K562 (cell line): ENCODE measurements at regions of chr1 and their contacts with region 1.

Region 1: GRCh38 chr1:167066333-167067122 is 23.6 kb downstream of the GPA33 start:
- DNase-seq: peak; percentile 87 to 97 (median 94)
- ATAC-seq: peak; percentile 94
- H3K4me3 ChIP-seq: no peak overlapping the region
- H3K27ac ChIP-seq: no peak overlapping the region
- H3K4me1 ChIP-seq: peaks cover 0 to 9% of the 10 kb centered on the region in 2 experiments; a peak in 3 of 5 replicates
- H3K27me3 ChIP-seq: peaks cover 41 to 45% of the 10 kb centered on the region in 2 experiments
- CTCF ChIP-seq: peak; percentile 94 to 98 (median 97)
- EP300 ChIP-seq: no peak
- POLR2A ChIP-seq: no peak
- RAD21 ChIP-seq: peak; percentile 98

Region 2: GRCh38 chr1:166740668-166741276 is 325.8 kb before region 1 on chr1:
- CTCF ChIA-PET with region 1: no interaction called
- POLR2A ChIA-PET with region 1: no interaction called
- in situ Hi-C with region 1: no loop called
- intact Hi-C with region 1: no loop called
- DNase-seq: no peak
- ATAC-seq: peak; percentile 43; the same call in 2 of the 3 replicates
- H3K4me3 ChIP-seq: no peak overlapping the region
- H3K27ac ChIP-seq: no peak overlapping the region
- H3K4me1 ChIP-seq: no peaks in the 10 kb centered on the region
- H3K27me3 ChIP-seq: no peaks in the 10 kb centered on the region
- CTCF ChIP-seq: no peak
- EP300 ChIP-seq: no peak
- POLR2A ChIP-seq: no peak
- RAD21 ChIP-seq: no peak

Region 3: DNA sequence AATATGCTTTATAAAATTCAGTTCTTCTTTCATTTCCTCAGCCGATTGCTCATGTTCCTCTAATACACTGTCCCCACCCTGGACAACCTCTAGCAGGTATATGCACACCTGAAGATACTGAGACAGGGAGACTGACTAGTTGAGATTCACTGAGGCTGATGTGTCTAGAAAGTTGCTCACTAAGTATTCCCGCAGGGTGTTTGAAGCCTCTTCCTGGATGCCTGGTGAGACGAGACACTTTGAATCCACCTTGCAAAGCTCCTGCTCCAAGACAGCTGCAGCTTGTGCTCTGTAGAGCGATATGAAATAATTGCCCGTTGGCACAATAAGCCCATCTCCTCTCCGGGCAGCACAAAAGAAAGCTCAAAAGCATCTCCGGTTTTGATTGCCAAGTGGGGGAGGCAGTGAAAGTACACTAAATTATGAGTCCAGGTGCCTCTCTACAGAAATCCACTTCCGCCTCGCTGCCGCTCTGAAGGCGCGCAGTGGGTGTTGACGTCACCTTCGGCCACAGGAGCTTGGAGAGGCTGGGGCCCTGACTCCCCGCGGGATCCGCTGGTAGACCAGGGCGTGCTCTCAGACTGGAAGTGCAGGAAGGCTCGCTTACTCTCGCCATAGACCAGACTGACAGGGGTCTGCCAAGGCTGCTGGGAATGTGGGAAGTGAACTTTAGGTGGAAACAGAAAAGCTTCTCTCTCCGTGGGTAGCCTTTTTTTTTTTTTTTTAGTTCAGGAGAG is 22.6 kb before region 1 on chr1:
- CTCF ChIA-PET with region 1: no interaction called
- POLR2A ChIA-PET with region 1: no interaction called
- in situ Hi-C with region 1: no loop called
- intact Hi-C with region 1: no loop called
- DNase-seq: peak; percentile 70 to 84 (median 78)
- ATAC-seq: peak; percentile 100
- H3K4me3 ChIP-seq: peak overlapping the region; percentile 26
- H3K27ac ChIP-seq: no peak overlapping the region
- H3K4me1 ChIP-seq: peaks cover 0 to 6% of the 10 kb centered on the region in 2 experiments; a peak in 2 of 5 replicates
- H3K27me3 ChIP-seq: peaks cover 0 to 5% of the 10 kb centered on the region in 2 experiments; a peak in 1 of 5 replicates
- CTCF ChIP-seq: no peak
- EP300 ChIP-seq: no peak
- POLR2A ChIP-seq: no peak
- RAD21 ChIP-seq: no peak

Region 4: DNA sequence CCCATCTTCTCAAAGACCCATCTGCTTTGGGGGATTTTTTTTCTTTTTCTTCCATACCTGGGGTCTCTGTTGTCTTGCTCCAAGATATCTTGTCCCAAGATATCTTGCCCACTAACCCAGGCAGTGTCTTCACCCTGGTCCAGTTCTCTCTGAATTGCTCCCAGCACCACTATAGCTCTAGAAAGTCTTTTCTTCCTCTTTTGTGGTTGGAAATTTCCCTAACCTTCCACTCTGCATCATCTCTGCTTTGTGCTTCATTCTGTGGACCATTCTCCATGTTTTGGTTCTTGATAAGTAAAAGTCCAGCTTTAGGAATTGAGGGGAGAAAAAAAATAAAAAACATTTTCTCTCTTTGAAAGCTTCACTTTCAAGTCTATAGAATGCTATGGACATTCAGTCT is 48.2 kb after region 1 on chr1:
- CTCF ChIA-PET with region 1: no interaction called
- POLR2A ChIA-PET with region 1: no interaction called
- in situ Hi-C with region 1: no loop called
- intact Hi-C with region 1: no loop called
- DNase-seq: no peak
- ATAC-seq: no peak
- H3K4me3 ChIP-seq: no peak overlapping the region
- H3K27ac ChIP-seq: no peak overlapping the region
- H3K4me1 ChIP-seq: no peaks in the 10 kb centered on the region
- H3K27me3 ChIP-seq: peaks cover 20 to 37% of the 10 kb centered on the region in 2 experiments
- CTCF ChIP-seq: no peak
- EP300 ChIP-seq: no peak
- POLR2A ChIP-seq: no peak
- RAD21 ChIP-seq: no peak

Region 5: DNA sequence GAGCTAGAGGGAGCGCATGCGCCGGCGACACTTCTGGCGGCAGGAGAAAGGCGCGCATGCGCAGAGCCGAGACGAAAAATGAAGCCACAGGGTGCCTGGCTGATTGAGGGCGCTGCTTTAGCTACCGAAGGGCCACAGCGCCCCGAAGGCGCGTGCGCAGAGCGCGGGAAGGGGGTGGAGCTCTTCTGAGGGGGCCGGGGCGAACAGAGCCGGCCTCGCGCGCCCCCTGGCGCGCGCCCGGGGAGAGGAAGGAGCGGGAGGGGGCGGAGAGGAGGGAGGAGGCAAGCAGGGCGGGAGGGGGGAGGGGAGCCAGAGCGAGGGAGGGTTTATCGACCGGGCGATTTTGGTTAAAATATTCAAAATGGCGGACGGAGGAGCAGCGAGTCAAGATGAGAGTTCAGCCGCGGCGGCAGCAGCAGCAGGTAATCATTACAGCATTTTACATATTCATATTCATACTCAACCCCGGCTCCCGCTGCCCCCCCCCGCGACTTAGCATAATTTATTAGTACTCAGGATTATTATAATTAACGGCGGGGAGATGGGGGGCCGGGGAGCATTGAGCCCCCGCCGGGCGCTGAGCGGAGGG is 154.1 kb after region 1 on chr1 and contains the start of gene POU2F1:
- CTCF ChIA-PET with region 1: interaction called, 6 read pairs
- POLR2A ChIA-PET with region 1: no interaction called
- in situ Hi-C with region 1: no loop called
- intact Hi-C with region 1: loop called (anchors 1 kb)
- DNase-seq: peak; percentile 96 to 99 (median 97)
- ATAC-seq: peak; percentile 82
- H3K4me3 ChIP-seq: peak within 1 kb of the TSS; percentile 69
- H3K27ac ChIP-seq: peak within 1 kb of the TSS; percentile 95
- H3K4me1 ChIP-seq: peaks cover 17 to 26% of the 10 kb centered on the region in 2 experiments; a peak in 4 of 5 replicates
- H3K27me3 ChIP-seq: no peaks in the 10 kb centered on the region
- CTCF ChIP-seq: peak; percentile 62 to 93 (median 93)
- EP300 ChIP-seq: no peak
- POLR2A ChIP-seq: no peak; the same call in none of the 2 replicates
- RAD21 ChIP-seq: peak; percentile 48 to 59
- polyA plus RNA-seq, gene POU2F1: 2.6 to 6.0 TPM

Region 6: GRCh38 chr1:167401260-167401873 is 334.8 kb after region 1 on chr1:
- CTCF ChIA-PET with region 1: interaction called, 3 read pairs
- POLR2A ChIA-PET with region 1: no interaction called
- in situ Hi-C with region 1: no loop called
- intact Hi-C with region 1: loop called (anchors 2 kb)
- DNase-seq: peak; percentile 38 to 78 (median 58)
- ATAC-seq: peak; percentile 99
- H3K4me3 ChIP-seq: no peak overlapping the region
- H3K27ac ChIP-seq: no peak overlapping the region
- H3K4me1 ChIP-seq: no peaks in the 10 kb centered on the region
- H3K27me3 ChIP-seq: no peaks in the 10 kb centered on the region
- CTCF ChIP-seq: peak; percentile 75 to 91 (median 86)
- EP300 ChIP-seq: no peak
- POLR2A ChIP-seq: no peak
- RAD21 ChIP-seq: peak; percentile 89

Region 7: GRCh38 chr1:167447521-167448136 is 381.1 kb after region 1 on chr1:
- CTCF ChIA-PET with region 1: interaction called, 22 read pairs
- POLR2A ChIA-PET with region 1: no interaction called
- in situ Hi-C with region 1: loop called (anchors 5 kb)
- intact Hi-C with region 1: loop called (anchors 1 kb)
- DNase-seq: peak in 3 of 4 experiments; percentile 16 to 47 (median 43)
- ATAC-seq: peak; percentile 77
- H3K4me3 ChIP-seq: 0 out of 2 replicates have a peak overlapping the region, but pooled peaks have one; percentile 7
- H3K27ac ChIP-seq: no peak overlapping the region
- H3K4me1 ChIP-seq: peaks cover 0 to 16% of the 10 kb centered on the region in 2 experiments; a peak in 4 of 5 replicates
- H3K27me3 ChIP-seq: peaks cover 14 to 24% of the 10 kb centered on the region in 2 experiments
- CTCF ChIP-seq: no peak
- EP300 ChIP-seq: no peak
- POLR2A ChIP-seq: no peak
- RAD21 ChIP-seq: no peak

Region 8: DNA sequence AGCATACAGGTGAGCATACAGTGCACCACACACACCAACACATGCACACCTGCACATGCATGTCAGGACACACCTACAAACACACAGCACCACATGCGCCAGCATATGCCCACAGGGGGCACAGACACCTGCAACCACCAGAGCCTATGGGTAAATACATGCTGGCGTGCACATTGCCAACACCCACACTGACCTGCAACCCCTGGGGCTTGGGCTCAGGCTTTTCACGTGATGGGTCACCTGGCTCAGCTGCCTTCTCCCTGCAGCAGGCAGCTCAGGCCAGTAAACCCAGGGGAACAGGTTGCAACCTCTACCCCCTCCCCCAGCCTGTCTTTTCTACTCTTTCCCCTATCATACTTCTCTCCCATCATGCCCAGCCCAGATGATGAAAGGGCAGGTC is 443.7 kb after region 1 on chr1:
- CTCF ChIA-PET with region 1: no interaction called
- POLR2A ChIA-PET with region 1: no interaction called
- in situ Hi-C with region 1: no loop called
- intact Hi-C with region 1: no loop called
- DNase-seq: peak in 1 of 4 experiments; percentile 5
- ATAC-seq: no peak; the same call in 2 of the 3 replicates
- H3K4me3 ChIP-seq: no peak overlapping the region
- H3K27ac ChIP-seq: no peak overlapping the region
- H3K4me1 ChIP-seq: no peaks in the 10 kb centered on the region
- H3K27me3 ChIP-seq: peaks cover 29 to 35% of the 10 kb centered on the region in 2 experiments
- CTCF ChIP-seq: no peak
- EP300 ChIP-seq: no peak
- POLR2A ChIP-seq: no peak
- RAD21 ChIP-seq: no peak

Region 9: DNA sequence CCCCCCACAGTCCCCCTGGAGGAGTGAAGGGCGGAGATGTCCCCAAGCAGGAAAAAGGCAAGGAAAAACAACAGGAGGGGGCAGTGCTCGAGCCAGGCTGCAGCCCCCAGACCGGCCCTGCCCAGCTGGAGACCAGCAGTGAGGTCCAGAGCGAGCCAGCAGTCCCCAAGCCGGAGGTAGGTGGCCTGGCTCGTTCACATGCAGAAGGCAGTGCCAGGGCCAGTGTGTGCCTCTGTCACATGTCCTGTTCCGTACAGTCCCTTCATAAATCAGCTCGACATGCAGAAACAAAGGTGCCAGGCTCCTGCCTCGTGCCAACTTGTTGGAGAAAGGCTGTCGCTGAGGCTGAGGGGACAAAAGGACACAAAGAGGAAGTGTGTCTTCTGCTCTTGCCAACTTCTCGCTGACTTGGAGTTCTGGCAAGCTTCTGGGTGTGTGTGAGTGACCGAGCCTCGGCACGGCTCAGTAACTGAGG is 631.2 kb after region 1 on chr1:
- CTCF ChIA-PET with region 1: no interaction called
- POLR2A ChIA-PET with region 1: no interaction called
- in situ Hi-C with region 1: loop called (anchors 10 kb)
- intact Hi-C with region 1: no loop called
- DNase-seq: no peak
- ATAC-seq: no peak
- H3K4me3 ChIP-seq: no peak overlapping the region
- H3K27ac ChIP-seq: no peak overlapping the region
- H3K4me1 ChIP-seq: no peaks in the 10 kb centered on the region; a peak in 1 of 5 replicates
- H3K27me3 ChIP-seq: no peaks in the 10 kb centered on the region
- CTCF ChIP-seq: no peak
- EP300 ChIP-seq: no peak
- POLR2A ChIP-seq: no peak
- RAD21 ChIP-seq: no peak